GM10248 (cell line): ENCODE measurements at regions of chr9 and their contacts with region 1.

Region 1: GRCh38 chr9:38371495-38371894 is 21.0 kb upstream of the ALDH1B1 start:
- DNase-seq: peak; percentile 69
- CTCF ChIP-seq: peak; percentile 47

Region 2: GRCh38 chr9:38401994-38402393 is 30.5 kb after region 1 on chr9:
- CTCF ChIA-PET with region 1: interaction called, 13 read pairs
- POLR2A ChIA-PET with region 1: no interaction called
- DNase-seq: no peak
- CTCF ChIP-seq: no peak

Region 3: DNA sequence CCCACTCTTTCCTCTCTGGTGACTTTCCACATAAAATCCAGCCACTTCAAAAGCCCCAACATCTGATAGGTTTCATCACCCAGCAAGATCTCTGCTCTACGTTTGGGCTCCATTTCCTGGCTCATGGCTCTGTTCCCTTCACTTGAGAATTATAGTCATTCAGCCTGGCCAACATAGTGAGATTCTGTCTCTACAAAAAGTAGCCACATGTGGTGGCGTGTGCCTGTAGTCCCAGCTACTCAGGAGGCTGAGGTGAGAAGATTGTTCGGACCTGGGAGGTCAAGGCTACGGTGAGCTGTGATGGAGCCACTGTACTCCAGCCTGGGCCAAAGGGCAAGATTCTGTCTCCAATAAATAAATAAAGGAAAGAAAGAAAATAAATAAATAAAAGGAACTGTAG is 136.1 kb after region 1 on chr9:
- CTCF ChIA-PET with region 1: no interaction called
- POLR2A ChIA-PET with region 1: no interaction called
- DNase-seq: no peak
- CTCF ChIP-seq: no peak